ENCODE measurements at regions of chr11 and their contacts with region 1.

Region 1: DNA sequence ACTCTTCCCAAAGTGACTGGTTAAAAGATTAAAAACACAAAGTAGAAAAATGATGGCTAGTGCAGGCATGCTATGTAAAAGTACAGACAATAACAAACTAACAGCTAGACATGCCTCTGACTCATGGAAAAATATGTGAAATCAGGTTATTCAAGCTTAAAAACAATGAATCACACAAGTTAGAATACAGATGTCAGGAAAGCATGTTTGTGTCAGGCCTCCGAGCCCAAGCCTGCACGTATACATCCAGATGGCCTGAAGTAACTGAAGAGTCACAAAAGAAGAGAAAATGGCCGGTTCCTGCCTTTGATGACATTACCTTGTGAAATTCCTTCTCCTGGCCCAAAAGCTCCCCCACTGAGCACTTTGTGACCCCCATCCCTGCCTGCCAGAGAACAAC is 110.1 kb downstream of the NOX4 start:
- DNase-seq: peak; percentile 74 to 76
- ATAC-seq: peak; percentile 89
- H3K4me3 ChIP-seq: no peak overlapping the region
- H3K27ac ChIP-seq: peak overlapping the region; percentile 93 to 98
- H3K4me1 ChIP-seq: peaks cover 0 to 4% of the 10 kb centered on the region in 2 donors
- H3K27me3 ChIP-seq: no peaks in the 10 kb centered on the region

Region 2: DNA sequence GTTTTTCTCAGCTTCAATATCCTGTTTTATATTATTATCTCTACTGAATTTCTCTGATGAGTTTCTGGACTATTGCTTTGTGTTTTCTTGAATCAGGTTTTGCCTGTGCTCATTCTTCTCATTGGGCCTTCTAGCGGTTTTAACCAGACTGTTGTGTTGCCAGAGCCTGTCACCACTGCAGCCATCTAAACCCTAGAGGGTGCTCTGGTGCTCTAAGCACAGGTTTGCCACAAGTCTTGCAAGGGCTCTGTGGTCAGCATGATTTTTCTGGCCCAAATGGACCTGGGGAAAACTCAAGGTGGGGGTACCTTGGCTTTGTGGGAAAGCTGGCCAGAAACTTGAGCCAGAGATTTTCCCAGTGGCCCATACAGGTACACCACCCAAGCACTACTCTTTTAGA is 255.8 kb before region 1 on chr11:
- intact Hi-C with region 1: no loop called
- DNase-seq: no peak
- ATAC-seq: no peak
- H3K4me3 ChIP-seq: no peak overlapping the region
- H3K27ac ChIP-seq: no peak overlapping the region
- H3K4me1 ChIP-seq: no peaks in the 10 kb centered on the region
- H3K27me3 ChIP-seq: no peaks in the 10 kb centered on the region

Region 3: GRCh38 chr11:89182773-89183518 is 198.1 kb before region 1 on chr11:
- intact Hi-C with region 1: loop called in 1 of 2 experiments (anchors 5 kb)
- DNase-seq: no peak
- ATAC-seq: no peak
- H3K4me3 ChIP-seq: no peak overlapping the region
- H3K27ac ChIP-seq: no peak overlapping the region
- H3K4me1 ChIP-seq: peaks cover 0 to 2% of the 10 kb centered on the region in 2 donors
- H3K27me3 ChIP-seq: no peaks in the 10 kb centered on the region

Measured in aorta (tissue), 5 donors.